T-cell (primary cell): ENCODE measurements at regions of chr7 and their contacts with region 1.

Region 1: GRCh38 chr7:71801996-71802395 is 610.1 kb downstream of the CALN1 start:
- DNase-seq: no peak
- ATAC-seq: no peak
- H3K4me3 ChIP-seq: no peak overlapping the region
- H3K4me3 Mint-ChIP-seq: no peak overlapping the region
- H3K27ac ChIP-seq: no peak overlapping the region
- H3K27ac Mint-ChIP-seq: no peak overlapping the region
- H3K4me1 ChIP-seq: no peaks in the 10 kb centered on the region
- H3K4me1 Mint-ChIP-seq: no peaks in the 10 kb centered on the region
- H3K27me3 ChIP-seq: no peaks in the 10 kb centered on the region
- H3K27me3 Mint-ChIP-seq: no peaks in the 10 kb centered on the region

Region 2: DNA sequence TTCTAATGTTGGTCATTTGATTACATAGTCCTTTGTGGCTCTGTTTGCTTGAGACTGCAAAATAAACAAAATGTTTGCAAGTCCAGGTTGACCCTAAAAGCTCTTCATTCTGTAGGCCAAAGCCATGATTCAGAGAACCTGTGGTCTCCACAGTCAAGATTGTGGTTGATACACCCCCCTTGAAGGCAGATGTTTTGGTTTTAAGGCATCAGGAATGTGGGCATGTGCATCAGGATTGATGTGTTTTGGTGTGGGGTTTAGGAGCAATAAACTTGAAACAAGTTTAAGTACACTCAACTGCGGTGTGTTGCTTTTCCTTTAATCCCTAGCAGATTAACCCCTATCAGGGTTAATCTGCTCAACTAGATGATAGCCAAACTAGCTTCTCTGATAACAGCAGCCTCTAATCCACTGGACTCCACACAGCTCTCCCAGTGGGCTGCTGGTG is 1049.2 kb before region 1 on chr7:
- CTCF ChIA-PET with region 1: no interaction called
- POLR2A ChIA-PET with region 1: interaction called in 1 of 2 experiments, 11 read pairs
- DNase-seq: no peak
- ATAC-seq: no peak
- H3K4me3 ChIP-seq: no peak overlapping the region
- H3K4me3 Mint-ChIP-seq: no peak overlapping the region
- H3K27ac ChIP-seq: no peak overlapping the region
- H3K27ac Mint-ChIP-seq: no peak overlapping the region
- H3K4me1 ChIP-seq: peaks cover 0 to 7% of the 10 kb centered on the region in 2 experiments
- H3K4me1 Mint-ChIP-seq: peaks cover 0 to 10% (median 6%) of the 10 kb centered on the region in 3 donors
- H3K27me3 ChIP-seq: no peaks in the 10 kb centered on the region
- H3K27me3 Mint-ChIP-seq: no peaks in the 10 kb centered on the region